AG04450 (cell line): ENCODE measurements at regions of chr3 and their contacts with region 1.

Region 1: DNA sequence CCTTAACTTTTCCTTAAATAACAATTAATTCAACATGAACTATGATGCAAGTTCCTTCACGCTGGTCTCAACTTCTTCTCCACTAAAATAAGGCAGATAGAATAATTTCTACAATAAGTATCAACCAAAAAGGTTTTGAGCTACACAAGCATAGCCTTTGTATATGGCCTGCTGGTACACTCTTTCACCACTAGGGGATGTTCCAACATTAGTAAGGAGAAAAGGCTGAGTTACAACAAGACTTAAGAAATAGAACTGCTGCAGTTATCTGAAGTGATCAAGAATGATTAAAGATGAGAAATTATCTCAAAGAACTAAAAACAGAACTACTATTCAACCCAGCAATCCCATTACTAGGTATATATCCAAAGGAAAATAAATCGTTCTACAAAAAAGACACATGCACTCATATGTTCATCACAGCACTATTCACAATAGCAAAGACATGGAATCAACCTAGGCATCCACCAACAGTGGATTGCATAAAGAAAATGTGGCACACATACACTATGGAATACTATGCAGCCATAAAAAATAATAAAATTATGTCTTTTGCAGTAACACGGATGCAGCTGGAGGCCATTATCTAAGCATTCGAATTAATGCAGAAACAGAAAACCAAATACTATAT is 14.4 kb downstream of the ATP13A3 start:
- DNase-seq: peak; percentile 55
- H3K4me3 ChIP-seq: no peak overlapping the region
- H3K27ac ChIP-seq: no peak overlapping the region
- H3K27me3 ChIP-seq: no peaks in the 10 kb centered on the region
- CTCF ChIP-seq: peak; percentile 100

Region 2: GRCh38 chr3:194224471-194225415 is 247.7 kb before region 1 on chr3:
- CTCF ChIA-PET with region 1: no interaction called
- POLR2A ChIA-PET with region 1: no interaction called
- DNase-seq: no peak
- H3K4me3 ChIP-seq: no peak overlapping the region
- H3K27ac ChIP-seq: no peak overlapping the region
- H3K27me3 ChIP-seq: peaks cover 45% of the 10 kb centered on the region
- CTCF ChIP-seq: no peak

Region 3: DNA sequence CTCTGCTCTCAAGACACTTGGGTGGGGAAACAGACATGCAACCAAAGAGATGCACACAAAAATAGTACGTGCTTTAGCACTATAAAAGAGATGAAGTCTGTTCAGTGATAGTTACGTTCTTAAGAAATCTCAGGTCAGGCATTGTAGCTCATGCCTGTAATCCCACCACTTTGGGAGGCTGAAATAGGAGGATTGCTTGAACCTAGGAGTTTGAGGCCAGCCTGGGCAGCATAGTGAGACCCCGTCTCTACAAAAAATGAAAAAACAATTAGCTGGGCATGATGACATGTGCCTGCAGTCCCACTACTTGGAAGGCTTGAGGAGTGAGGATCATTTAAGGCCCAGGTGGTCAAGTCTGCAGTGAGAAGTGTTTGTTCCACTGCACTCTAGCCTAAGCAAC is 37.9 kb before region 1 on chr3:
- CTCF ChIA-PET with region 1: interaction called, 11 read pairs
- POLR2A ChIA-PET with region 1: no interaction called
- DNase-seq: no peak
- H3K4me3 ChIP-seq: no peak overlapping the region
- H3K27ac ChIP-seq: no peak overlapping the region
- H3K27me3 ChIP-seq: no peaks in the 10 kb centered on the region
- CTCF ChIP-seq: no peak

Region 4: DNA sequence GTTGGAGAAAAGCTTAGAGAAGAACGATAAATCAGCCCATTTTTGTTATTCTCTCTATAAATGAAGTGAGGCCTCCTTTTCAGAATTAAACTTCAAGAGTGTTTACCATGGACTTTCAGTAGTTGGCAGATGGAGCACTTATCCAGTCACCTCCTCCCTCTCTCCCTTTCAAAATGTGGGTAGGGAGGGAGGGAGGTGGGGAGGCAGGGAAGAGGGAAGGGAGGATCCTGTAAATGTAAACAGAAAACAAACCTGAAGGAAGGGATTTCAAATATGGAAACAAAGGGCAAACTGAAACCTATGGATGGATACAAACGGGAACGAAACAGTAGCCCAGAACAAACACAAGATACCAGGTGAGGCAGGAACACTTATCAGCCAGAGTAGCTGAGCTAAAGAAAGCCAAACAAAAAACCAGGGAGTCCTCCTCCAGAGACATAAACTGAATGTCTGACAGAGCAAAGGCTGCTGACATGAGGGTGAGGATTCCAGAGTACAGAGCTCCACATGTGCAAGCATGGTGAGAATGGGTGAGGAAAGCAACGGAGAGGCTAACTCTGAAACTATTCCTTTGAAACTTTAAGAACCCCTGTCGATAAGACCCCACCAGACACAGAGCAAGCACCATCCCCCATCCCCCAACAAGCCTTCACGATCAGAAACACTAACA is 32.4 kb before region 1 on chr3:
- CTCF ChIA-PET with region 1: interaction called, 11 read pairs
- POLR2A ChIA-PET with region 1: no interaction called
- DNase-seq: no peak
- H3K4me3 ChIP-seq: no peak overlapping the region
- H3K27ac ChIP-seq: no peak overlapping the region
- H3K27me3 ChIP-seq: no peaks in the 10 kb centered on the region
- CTCF ChIP-seq: no peak

Region 5: DNA sequence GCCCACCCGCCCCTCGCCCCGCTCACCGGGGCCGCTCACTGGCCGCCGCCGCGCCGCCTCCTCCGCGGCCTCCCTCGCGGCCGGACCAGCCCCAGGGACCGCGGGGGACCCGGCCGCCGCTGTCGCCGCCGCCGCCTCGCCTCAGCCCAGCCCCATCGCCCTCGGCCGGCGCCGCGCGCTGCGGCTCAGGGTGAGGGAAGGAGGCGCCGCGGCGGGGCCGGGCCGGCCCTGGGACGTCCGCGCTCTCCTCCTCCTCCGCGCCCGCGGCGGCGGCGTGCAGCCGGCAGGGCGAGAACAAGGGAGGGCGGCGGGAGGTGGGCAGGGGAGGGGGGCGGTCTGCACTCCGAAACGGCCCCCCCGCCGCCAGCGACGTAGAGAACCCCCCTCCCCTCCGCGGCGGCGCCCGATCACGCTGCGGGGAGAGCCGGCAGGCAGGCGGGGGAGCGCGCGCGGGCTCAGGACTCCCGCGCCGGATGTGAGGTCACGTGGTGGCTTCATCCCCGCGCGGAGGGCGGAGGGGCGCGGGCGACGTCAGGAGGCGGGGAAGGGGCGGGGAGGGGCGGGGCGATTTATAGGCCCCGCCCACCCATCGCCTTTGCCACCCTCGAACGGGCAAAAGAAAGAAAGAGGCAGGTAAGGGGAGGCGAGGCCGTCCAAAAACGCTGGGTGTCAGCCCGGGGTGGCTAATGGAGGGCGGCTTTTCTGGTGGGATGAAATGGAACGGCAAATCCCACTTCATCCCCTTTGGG is 14.3 kb after region 1 on chr3 and contains the start of gene ATP13A3:
- CTCF ChIA-PET with region 1: interaction called, 28 read pairs
- POLR2A ChIA-PET with region 1: no interaction called
- DNase-seq: peak; percentile 77
- H3K4me3 ChIP-seq: peak within 1 kb of the TSS; percentile 79
- H3K27ac ChIP-seq: peak within 1 kb of the TSS; percentile 89
- H3K27me3 ChIP-seq: no peaks in the 10 kb centered on the region
- CTCF ChIP-seq: no peak
- polyA plus RNA-seq, gene ATP13A3: 98.5 and 132 TPM in 2 replicates

Region 6: GRCh38 chr3:194592798-194593752 is 120.7 kb after region 1 on chr3:
- CTCF ChIA-PET with region 1: interaction called, 112 read pairs
- POLR2A ChIA-PET with region 1: no interaction called
- DNase-seq: peak; percentile 99
- H3K4me3 ChIP-seq: no peak overlapping the region
- H3K27ac ChIP-seq: peak overlapping the region; percentile 71
- H3K27me3 ChIP-seq: no peaks in the 10 kb centered on the region
- CTCF ChIP-seq: no peak

Region 7: DNA sequence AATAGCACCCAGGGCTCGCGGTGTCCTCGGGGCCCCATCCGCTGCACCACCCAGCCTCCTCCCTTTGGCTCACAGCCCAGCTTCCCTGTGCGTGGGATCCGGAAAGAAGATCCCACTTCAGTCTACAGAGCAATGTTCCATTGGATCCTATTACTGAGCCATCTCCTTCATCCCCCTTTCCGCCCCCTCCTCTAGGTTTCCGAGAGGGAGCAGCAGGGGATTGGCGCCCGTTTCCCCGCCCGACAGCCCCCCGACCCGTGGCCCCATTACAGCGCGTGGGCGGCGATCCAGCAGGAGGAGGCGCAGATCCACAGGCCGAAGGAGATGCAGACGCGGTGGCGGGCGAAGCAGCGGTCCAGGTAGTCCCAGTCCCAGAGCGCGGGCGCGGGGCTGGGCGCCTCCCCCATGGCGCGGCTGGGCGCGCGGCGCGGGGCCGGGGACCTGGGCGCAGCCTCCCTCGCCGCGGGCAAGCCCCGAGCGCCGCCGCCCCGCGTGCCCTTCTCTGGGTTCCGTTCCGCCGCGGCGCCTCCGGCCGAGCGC is 160.5 kb after region 1 on chr3:
- CTCF ChIA-PET with region 1: interaction called, 26 read pairs
- POLR2A ChIA-PET with region 1: no interaction called
- DNase-seq: no peak
- H3K4me3 ChIP-seq: peak overlapping the region; percentile 68
- H3K27ac ChIP-seq: peak overlapping the region; percentile 52
- H3K27me3 ChIP-seq: no peaks in the 10 kb centered on the region
- CTCF ChIP-seq: no peak

Region 8: DNA sequence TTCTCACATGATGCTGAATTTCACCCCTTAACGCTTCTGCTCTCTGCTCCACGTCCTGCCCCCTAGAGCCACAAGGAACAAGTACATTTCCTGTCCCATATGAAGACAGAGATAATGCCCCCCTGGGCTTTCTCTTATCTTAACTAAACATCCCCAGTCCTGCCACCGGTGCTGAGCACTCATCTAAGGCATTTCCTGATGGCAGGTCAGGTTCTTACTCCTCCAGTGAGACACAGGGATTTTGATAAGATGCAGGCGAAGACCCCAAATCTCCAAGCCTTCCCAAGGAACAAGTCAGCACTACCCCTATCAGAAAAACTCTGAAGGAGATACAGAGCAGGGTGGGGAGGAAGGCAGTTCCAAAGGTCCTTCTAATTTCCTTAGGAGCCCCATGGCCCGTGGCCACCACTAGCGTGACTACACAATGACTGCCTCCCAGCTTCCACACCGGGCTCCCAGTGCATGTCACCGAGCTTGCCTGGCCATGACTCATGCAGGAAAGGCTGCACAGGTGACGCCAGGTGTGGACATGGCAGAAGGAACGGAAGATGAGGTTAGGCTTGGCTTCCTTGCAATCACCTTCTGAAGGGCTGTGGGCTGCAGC is 645.7 kb after region 1 on chr3:
- CTCF ChIA-PET with region 1: no interaction called
- POLR2A ChIA-PET with region 1: no interaction called
- DNase-seq: no peak
- H3K4me3 ChIP-seq: no peak overlapping the region
- H3K27ac ChIP-seq: peak overlapping the region; percentile 11
- H3K27me3 ChIP-seq: no peaks in the 10 kb centered on the region
- CTCF ChIP-seq: no peak; the same call in 1 of the 2 replicates